ENCODE measurements at regions of chr3 and their contacts with region 1.

Region 1: GRCh38 chr3:68893600-68894239 is 38.6 kb downstream of the TAFA4 start:
- DNase-seq: peak; percentile 10
- ATAC-seq: no peak
- H3K4me3 ChIP-seq: no peak overlapping the region
- H3K27ac ChIP-seq: no peak overlapping the region
- H3K4me1 ChIP-seq: no peaks in the 10 kb centered on the region
- H3K27me3 ChIP-seq: peaks cover 3% of the 10 kb centered on the region; the same call in 1 of the 2 replicates
- CTCF ChIP-seq: peak; percentile 32; the same call in 1 of the 2 replicates

Region 2: DNA sequence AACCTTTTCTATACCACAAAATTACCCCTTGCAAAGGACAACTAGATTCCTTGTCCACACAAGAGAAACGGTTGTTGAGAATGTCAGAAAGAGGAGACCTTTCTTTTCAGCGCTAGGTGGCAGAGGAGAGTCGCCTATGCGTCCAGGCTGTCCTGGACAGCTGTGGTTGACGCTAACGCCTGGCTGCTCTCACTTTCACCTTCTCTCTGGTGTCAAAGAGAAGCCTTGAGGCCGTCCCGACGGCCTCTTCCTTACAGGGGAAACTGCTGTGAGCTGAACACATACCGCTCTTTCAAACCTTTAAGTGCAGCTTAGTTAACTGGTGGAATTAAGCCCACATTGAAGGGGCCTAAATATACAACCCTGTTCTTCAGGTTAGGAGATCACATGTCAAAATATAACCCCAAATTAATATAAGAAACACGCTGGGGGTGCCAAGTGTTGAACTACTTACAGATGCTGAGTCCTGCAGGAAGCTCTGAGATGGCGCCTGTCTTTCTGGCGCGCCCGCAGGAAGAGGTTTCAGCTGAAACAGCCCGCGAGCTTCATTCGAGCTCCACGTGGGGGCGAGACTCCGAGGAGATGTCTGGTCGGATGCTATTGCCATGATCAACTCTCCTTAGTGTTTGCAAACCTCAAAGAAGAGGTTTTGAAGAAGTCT is 1921.7 kb before region 1 on chr3:
- CTCF ChIA-PET with region 1: no interaction called
- POLR2A ChIA-PET with region 1: no interaction called
- in situ Hi-C with region 1: no loop called
- intact Hi-C with region 1: loop called (anchors 5 kb)
- DNase-seq: peak; percentile 62
- ATAC-seq: peak; percentile 99
- H3K4me3 ChIP-seq: peak overlapping the region; percentile 17 to 44; a peak in 3 of 4 replicates
- H3K27ac ChIP-seq: no peak overlapping the region
- H3K4me1 ChIP-seq: no peaks in the 10 kb centered on the region
- H3K27me3 ChIP-seq: peaks cover 2% of the 10 kb centered on the region
- CTCF ChIP-seq: peak; percentile 82

Region 3: GRCh38 chr3:68972358-68972979 is 78.7 kb after region 1 on chr3:
- CTCF ChIA-PET with region 1: no interaction called
- POLR2A ChIA-PET with region 1: no interaction called
- in situ Hi-C with region 1: no loop called
- intact Hi-C with region 1: loop called (anchors 5 kb)
- DNase-seq: peak; percentile 30
- ATAC-seq: peak; percentile 94
- H3K4me3 ChIP-seq: no peak overlapping the region
- H3K27ac ChIP-seq: no peak overlapping the region
- H3K4me1 ChIP-seq: no peaks in the 10 kb centered on the region
- H3K27me3 ChIP-seq: no peaks in the 10 kb centered on the region; the same call in none of the 2 replicates
- CTCF ChIP-seq: peak; percentile 83

Region 4: GRCh38 chr3:69181592-69182211 is 288.0 kb after region 1 on chr3:
- CTCF ChIA-PET with region 1: no interaction called
- POLR2A ChIA-PET with region 1: no interaction called
- in situ Hi-C with region 1: no loop called
- intact Hi-C with region 1: no loop called
- DNase-seq: no peak
- ATAC-seq: peak; percentile 58; the same call in 1 of the 2 replicates
- H3K4me3 ChIP-seq: no peak overlapping the region
- H3K27ac ChIP-seq: no peak overlapping the region
- H3K4me1 ChIP-seq: no peaks in the 10 kb centered on the region
- H3K27me3 ChIP-seq: no peaks in the 10 kb centered on the region
- CTCF ChIP-seq: no peak

Region 5: GRCh38 chr3:69484507-69485393 is 591.0 kb after region 1 on chr3:
- CTCF ChIA-PET with region 1: no interaction called
- POLR2A ChIA-PET with region 1: no interaction called
- in situ Hi-C with region 1: no loop called
- intact Hi-C with region 1: no loop called
- DNase-seq: no peak
- ATAC-seq: no peak
- H3K4me3 ChIP-seq: no peak overlapping the region
- H3K27ac ChIP-seq: no peak overlapping the region
- H3K4me1 ChIP-seq: no peaks in the 10 kb centered on the region
- H3K27me3 ChIP-seq: no peaks in the 10 kb centered on the region
- CTCF ChIP-seq: no peak

Measured in Panc1 (cell line).